ENCODE measurements at regions of chr7 and their contacts with region 1.

Region 1: GRCh38 chr7:140439359-140439758 is 35.5 kb downstream of the RAB19 start:
- H3K4me3 ChIP-seq: no peak overlapping the region
- H3K27ac ChIP-seq: no peak overlapping the region
- H3K4me1 ChIP-seq: no peaks in the 10 kb centered on the region
- CTCF ChIP-seq: no peak

Region 2: DNA sequence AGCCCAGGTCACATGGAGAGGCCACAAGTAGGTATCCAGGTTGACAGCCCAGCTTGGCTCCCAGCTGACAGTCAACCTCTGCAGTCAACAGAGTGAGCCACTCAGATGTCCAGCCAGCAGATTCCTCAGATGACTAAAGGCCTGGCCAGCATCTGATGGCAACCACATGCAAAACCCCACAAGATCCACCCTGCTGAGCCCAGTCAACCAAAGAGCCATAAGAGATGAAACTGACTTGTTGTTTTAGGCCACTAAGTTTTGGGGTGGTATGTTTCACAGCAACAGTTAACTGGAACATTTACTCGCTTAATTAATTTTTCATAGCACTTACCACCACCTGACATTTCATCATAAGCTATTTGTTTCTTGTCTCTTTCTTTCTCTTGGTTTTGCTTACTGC is 155.3 kb before region 1 on chr7:
- CTCF ChIA-PET with region 1: no interaction called
- POLR2A ChIA-PET with region 1: no interaction called
- H3K4me3 ChIP-seq: no peak overlapping the region
- H3K27ac ChIP-seq: no peak overlapping the region
- H3K4me1 ChIP-seq: no peaks in the 10 kb centered on the region
- CTCF ChIP-seq: no peak

Region 3: GRCh38 chr7:140456551-140457051 is 17.2 kb after region 1 on chr7:
- CTCF ChIA-PET with region 1: interaction called, 15 read pairs
- POLR2A ChIA-PET with region 1: no interaction called
- H3K4me3 ChIP-seq: no peak overlapping the region
- H3K27ac ChIP-seq: no peak overlapping the region
- H3K4me1 ChIP-seq: no peaks in the 10 kb centered on the region
- CTCF ChIP-seq: no peak

Region 4: GRCh38 chr7:140533394-140533872 is 94.1 kb after region 1 on chr7:
- CTCF ChIA-PET with region 1: no interaction called
- POLR2A ChIA-PET with region 1: no interaction called
- H3K4me3 ChIP-seq: no peak overlapping the region
- H3K27ac ChIP-seq: no peak overlapping the region
- H3K4me1 ChIP-seq: no peaks in the 10 kb centered on the region
- CTCF ChIP-seq: no peak

Measured in HEK293 (cell line).